ENCODE measurements at regions of chr9 and their contacts with region 1.

Region 1: GRCh38 chr9:15104826-15105420 is 194.7 kb upstream of the FREM1 start:
- DNase-seq: peak in 4 of 5 donors; percentile 46 to 52 (median 50)
- H3K4me3 ChIP-seq: no peak overlapping the region
- H3K4me3 Mint-ChIP-seq: peak overlapping the region in 1 of 8 donors; percentile 22
- H3K27ac ChIP-seq: no peak overlapping the region
- H3K27ac Mint-ChIP-seq: no peak overlapping the region
- H3K4me1 ChIP-seq: no peaks in the 10 kb centered on the region
- H3K4me1 Mint-ChIP-seq: no peaks in the 10 kb centered on the region
- H3K27me3 ChIP-seq: no peaks in the 10 kb centered on the region
- H3K27me3 Mint-ChIP-seq: peaks cover 8 to 11% of the 10 kb centered on the region in 2 donors

Region 2: GRCh38 chr9:15142878-15143534 is 38.1 kb after region 1 on chr9:
- CTCF ChIA-PET with region 1: interaction called, 126 read pairs
- POLR2A ChIA-PET with region 1: no interaction called
- intact Hi-C with region 1: loop called (anchors 2 kb)
- DNase-seq: peak in 4 of 5 donors; percentile 15 to 35 (median 26)
- H3K4me3 ChIP-seq: no peak overlapping the region
- H3K4me3 Mint-ChIP-seq: no peak overlapping the region
- H3K27ac ChIP-seq: no peak overlapping the region
- H3K27ac Mint-ChIP-seq: no peak overlapping the region
- H3K4me1 ChIP-seq: no peaks in the 10 kb centered on the region
- H3K4me1 Mint-ChIP-seq: peaks cover 0 to 8% (median 3%) of the 10 kb centered on the region in 4 donors
- H3K27me3 ChIP-seq: no peaks in the 10 kb centered on the region
- H3K27me3 Mint-ChIP-seq: peaks cover 0 to 1% of the 10 kb centered on the region in 2 donors

Region 3: DNA sequence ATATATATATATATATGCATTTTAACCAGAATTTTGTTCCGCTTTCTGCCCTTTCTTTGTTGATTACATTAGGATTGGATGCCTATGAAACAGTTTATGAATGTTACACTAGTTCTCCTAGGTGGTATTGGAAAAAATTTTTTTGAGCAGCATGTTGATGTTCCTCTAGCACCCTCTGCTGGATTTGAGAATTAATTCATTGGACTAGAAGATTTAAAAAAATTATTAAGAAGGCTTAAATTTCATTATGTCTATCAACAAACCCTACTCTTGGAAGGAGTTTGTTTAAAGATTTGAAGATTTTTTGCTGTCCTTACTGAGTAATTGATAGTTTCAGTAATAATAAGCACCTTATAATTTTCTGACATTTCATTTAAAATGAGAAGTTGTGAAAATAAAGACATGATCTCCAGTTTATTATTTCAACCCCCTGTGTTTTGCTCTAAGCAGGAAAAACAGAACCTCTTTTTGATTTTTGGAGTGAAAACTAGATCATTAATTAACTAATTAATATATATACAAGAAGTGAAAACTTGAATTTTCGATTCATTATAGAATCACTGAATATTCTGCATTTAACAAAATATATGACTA is 537.5 kb after region 1 on chr9:
- CTCF ChIA-PET with region 1: no interaction called
- POLR2A ChIA-PET with region 1: no interaction called
- intact Hi-C with region 1: loop called (anchors 10 kb)
- DNase-seq: peak in 4 of 5 donors; percentile 6 to 15 (median 12)
- H3K4me3 ChIP-seq: no peak overlapping the region
- H3K4me3 Mint-ChIP-seq: no peak overlapping the region
- H3K27ac ChIP-seq: no peak overlapping the region
- H3K27ac Mint-ChIP-seq: no peak overlapping the region
- H3K4me1 ChIP-seq: no peaks in the 10 kb centered on the region
- H3K4me1 Mint-ChIP-seq: peaks cover 0 to 1% (median 0%) of the 10 kb centered on the region in 4 donors
- H3K27me3 ChIP-seq: no peaks in the 10 kb centered on the region
- H3K27me3 Mint-ChIP-seq: peaks cover 2 to 3% of the 10 kb centered on the region in 2 donors

Measured in CD4-positive, alpha-beta memory T cell (primary cell).